ENCODE measurements at regions of chr17 and their contacts with region 1.

Region 1: DNA sequence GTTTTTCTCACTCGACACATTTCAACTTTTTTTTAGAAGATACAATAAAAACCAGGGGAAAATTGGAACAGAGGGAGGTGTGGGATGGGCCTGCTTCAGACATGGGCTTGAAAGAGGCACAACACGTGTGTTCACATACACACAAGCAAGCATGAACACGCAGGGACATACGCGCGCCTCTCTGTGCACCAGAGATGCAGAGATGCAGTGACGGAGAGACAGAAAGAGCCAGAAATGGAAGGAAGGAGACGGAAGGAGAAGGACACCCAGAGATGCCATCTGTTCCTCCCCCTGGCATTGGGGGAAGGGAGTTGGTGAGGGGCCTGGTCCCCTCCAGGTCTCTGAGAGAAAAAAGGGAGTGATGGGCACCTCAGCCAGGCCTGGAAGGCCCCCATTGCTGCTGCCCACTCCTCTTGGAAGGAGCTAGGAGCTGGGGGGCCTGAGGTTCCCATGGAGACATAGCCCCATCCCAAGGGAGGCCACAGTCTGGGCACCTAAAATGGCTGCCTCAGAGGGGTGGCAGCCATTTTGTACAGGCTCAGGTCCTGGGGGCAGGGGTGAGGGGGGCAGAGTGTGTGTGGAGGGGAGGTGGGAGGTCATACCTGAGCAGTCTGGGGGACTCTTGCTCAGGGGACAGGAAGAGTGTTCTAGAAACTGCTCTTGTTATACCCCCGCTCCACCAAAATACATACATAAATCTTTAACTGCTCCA is 3.8 kb upstream of the NEUROD2 start:
- DNase-seq: no peak
- ATAC-seq: no peak
- H3K4me3 Mint-ChIP-seq: no peak overlapping the region
- H3K27ac Mint-ChIP-seq: no peak overlapping the region
- H3K4me1 Mint-ChIP-seq: peaks cover 5% of the 10 kb centered on the region
- H3K27me3 Mint-ChIP-seq: peaks cover 25% of the 10 kb centered on the region

Region 2: DNA sequence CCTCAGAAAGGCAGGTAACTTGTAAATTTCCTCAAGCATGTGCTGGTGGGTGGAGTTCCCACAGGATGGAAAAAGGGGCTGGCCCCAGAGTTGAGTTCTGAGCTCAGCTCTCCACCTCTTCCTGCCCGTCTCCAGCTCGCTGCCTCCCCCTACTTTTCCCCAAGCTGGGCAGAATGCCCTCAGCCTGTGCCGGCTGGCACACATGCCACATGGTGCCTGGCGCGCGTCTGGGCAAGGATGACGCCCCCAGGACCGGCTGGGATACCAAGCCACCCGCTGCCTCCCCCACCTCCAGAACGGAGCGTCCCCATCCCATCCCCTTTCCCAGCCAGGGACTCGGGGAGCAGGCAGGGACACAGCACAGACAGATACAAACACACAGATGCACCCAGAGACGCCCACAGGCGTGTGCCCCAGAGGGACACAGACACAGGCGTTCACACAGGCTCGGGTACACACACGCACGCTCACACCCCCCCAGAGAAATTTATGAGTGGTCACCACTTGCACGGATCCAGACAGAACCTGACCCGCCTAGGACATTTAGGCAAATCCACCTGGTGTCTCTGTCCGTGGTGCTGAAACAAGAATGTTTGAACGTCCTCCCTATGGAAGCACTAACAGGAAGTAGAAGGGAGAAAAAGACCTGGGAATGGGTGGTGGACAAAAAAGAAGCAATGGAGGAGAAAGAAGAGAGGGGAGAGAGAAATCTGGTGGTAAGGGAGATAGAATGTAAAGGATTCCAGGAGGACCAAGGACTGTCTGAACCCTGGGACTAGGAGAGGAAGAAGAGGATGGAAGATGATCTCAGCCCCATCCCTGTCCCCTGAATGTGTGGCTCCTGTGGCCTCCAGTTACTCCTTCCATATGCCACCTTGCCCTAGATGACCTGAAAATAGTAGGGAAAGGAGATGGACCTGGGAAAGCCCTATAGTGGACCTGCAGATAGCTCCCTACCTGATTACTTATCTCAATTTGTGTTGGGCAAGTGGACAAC is 19.3 kb before region 1 on chr17:
- CTCF ChIA-PET with region 1: interaction called, 4 read pairs
- POLR2A ChIA-PET with region 1: no interaction called
- intact Hi-C with region 1: loop called in 1 of 2 experiments (anchors 2 kb)
- DNase-seq: peak; percentile 60
- ATAC-seq: no peak
- H3K4me3 Mint-ChIP-seq: no peak overlapping the region
- H3K27ac Mint-ChIP-seq: no peak overlapping the region
- H3K4me1 Mint-ChIP-seq: peaks cover 6% of the 10 kb centered on the region
- H3K27me3 Mint-ChIP-seq: peaks cover 50% of the 10 kb centered on the region